Calu3 (cell line): ENCODE measurements at regions of chr19 and their contacts with region 1.

Region 1: DNA sequence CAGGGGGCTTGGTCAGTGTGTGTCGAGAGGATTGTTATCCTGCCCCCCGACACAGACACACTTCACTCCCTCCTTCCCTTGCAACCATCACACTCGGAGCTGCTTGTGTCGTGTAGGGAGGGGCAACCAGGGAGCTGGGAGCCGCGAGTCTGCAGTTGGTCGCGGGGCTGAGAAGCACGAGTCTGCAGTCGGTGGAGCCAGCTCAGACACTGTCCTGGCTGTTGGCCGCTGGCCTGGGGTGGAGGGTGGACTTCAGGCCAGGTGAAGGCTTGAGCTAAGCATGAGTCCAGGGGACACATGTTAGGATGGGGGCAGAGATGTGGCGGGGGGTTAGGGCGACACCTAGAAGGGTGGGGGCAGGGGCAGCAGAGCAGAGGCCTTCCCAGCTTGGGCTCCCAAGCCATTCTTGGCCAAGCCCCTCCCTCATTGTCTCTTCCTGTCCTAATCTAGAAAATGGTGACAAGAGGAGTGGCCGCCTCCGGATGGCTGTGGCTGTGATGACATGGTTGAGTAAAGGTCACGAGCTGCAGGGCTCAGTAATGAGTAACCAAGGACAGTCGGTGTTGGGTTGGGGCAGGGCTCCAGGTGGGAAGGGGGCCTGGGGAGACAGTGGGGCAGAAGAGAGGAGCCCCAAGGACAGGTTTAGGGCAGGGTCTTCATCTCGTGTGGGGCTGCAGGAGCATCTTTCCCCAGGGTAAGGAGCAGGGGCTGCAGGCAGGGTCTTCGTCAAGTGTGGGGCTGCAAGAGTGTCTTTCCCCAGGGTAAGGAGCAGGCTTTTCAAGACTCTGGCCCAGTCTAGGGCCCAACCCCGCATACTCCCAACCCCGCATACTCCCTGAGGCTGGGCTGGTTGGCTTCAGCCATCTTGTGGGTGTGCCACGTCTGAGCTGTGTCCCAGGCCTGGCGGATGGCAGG is 8.6 kb downstream of the PPP5C start:
- DNase-seq: peak; percentile 36
- H3K4me3 Mint-ChIP-seq: peak overlapping the region; percentile 41
- H3K27ac Mint-ChIP-seq: peak overlapping the region; percentile 69
- H3K4me1 Mint-ChIP-seq: peaks cover 66% of the 10 kb centered on the region
- H3K27me3 Mint-ChIP-seq: no peaks in the 10 kb centered on the region
- CTCF ChIP-seq: no peak

Region 2: GRCh38 chr19:46373421-46374359 is 18.2 kb after region 1 on chr19:
- CTCF ChIA-PET with region 1: interaction called, 20 read pairs
- intact Hi-C with region 1: no loop called
- DNase-seq: peak; percentile 99
- H3K4me3 Mint-ChIP-seq: peak overlapping the region; percentile 71
- H3K27ac Mint-ChIP-seq: peak overlapping the region; percentile 90
- H3K4me1 Mint-ChIP-seq: peaks cover 47% of the 10 kb centered on the region
- H3K27me3 Mint-ChIP-seq: no peaks in the 10 kb centered on the region
- CTCF ChIP-seq: no peak